ENCODE measurements at regions of chr7 and their contacts with region 1.

Region 1: DNA sequence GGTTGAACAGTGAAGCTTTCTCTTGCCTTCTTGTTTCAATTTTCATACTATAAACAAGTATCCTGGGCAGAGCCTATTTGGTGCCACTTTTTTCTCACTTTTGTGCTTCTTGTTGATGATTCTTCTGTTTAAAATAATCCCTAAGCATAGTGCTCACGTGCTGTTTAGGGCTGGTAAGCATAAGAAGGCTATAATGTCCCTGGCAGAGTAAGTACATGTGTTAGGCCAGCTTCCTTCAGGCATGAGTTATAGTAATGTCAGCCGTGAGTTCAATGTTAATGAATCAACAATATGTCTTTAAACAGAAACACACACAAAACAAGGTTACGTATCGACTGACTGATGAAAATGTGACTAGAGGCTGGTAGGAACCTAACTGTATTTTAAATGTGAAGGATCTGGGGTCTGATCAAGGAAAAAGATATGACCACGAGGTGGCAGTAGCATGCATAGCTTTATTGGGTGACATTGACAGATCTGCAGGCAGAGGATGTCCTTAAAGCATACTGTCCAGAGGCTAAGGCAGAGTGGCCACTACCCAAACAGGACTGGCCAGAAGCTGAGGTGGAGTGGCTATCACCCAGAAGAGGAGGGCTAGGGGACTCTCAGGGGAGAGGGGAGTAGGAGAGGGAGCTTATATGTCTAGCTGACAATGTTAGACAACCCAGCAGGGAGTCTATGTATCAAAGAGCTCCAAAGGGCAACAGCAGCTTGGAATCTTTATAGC is 113.7 kb downstream of the BRAF start:
- DNase-seq: peak; percentile 66
- H3K4me3 ChIP-seq: no peak overlapping the region
- H3K27ac ChIP-seq: no peak overlapping the region
- H3K4me1 ChIP-seq: no peaks in the 10 kb centered on the region
- H3K27me3 ChIP-seq: no peaks in the 10 kb centered on the region
- CTCF ChIP-seq: peak; percentile 55

Region 2: GRCh38 chr7:141011443-141011842 is 200.4 kb after region 1 on chr7:
- intact Hi-C with region 1: loop called (anchors 2 kb)
- DNase-seq: no peak
- H3K4me3 ChIP-seq: no peak overlapping the region
- H3K27ac ChIP-seq: no peak overlapping the region
- H3K4me1 ChIP-seq: peaks cover 6% of the 10 kb centered on the region
- H3K27me3 ChIP-seq: no peaks in the 10 kb centered on the region
- CTCF ChIP-seq: no peak

Region 3: DNA sequence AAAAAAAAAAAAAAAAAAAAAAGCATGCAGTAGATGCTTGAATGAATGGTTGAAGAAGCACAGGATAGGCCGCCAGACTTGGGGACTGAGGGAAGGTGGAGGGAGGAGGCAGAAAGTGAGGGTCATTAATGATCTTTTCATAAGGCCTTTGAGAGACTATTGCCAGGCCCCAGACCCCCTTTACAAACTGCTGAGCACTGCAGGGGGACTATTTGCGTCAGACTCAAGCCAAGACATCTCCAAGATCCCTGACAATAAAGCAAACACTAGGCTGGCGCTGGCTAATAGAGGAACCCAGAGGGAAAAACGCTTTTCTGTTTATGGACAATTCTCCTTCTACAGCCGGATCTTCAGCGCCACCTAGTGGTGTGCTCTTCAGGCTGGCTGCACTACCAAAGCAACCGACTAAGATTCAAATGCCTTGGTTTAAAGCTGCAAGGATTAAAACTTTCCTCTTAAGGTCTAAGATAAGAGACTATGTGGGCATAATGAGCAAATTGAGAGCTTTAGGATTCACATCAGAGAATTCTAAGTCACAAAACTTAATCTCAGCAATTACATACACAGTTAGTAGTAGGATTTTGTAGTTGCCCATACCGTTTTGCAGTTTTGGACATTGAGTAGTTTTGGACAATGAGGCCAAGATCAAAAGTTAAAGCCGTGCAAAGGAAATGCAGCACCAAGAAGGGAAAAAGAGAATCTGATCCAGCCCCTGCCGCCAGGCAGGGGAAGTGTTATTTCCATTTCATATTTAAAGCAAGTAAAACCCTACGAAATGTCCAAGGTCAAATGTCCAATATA is 722.4 kb after region 1 on chr7:
- intact Hi-C with region 1: loop called (anchors 10 kb)
- DNase-seq: peak; percentile 49
- H3K4me3 ChIP-seq: no peak overlapping the region
- H3K27ac ChIP-seq: no peak overlapping the region
- H3K4me1 ChIP-seq: no peaks in the 10 kb centered on the region
- H3K27me3 ChIP-seq: no peaks in the 10 kb centered on the region
- CTCF ChIP-seq: peak; percentile 92